A673 (cell line): ENCODE measurements at regions of chr1 and their contacts with region 1.

Region 1: DNA sequence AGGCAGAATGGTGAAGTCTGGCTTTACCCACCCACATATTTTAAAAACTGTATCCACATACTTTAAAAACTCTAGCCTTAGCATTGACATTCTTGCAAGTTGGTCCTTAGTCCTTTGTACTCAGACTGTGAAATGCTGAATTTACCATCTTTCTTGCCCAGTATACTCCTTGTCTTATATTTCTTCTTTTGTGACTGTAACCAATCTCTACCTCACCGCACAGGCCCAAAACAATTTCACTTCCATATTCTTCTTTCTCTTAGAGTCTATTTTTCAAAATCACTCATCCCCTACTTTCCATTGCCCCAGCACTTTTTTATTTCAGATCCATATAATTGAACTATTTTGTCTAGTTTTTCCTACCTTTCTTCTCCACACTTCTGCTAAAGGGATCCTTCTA is 892.4 kb upstream of the B3GALT2 start:
- DNase-seq: no peak
- H3K4me3 ChIP-seq: no peak overlapping the region
- H3K27ac ChIP-seq: no peak overlapping the region
- H3K4me1 ChIP-seq: no peaks in the 10 kb centered on the region
- H3K27me3 ChIP-seq: no peaks in the 10 kb centered on the region
- CTCF ChIP-seq: no peak

Region 2: GRCh38 chr1:193567937-193568336 is 510.8 kb before region 1 on chr1:
- CTCF ChIA-PET with region 1: no interaction called
- POLR2A ChIA-PET with region 1: interaction called, 19 read pairs
- intact Hi-C with region 1: no loop called
- DNase-seq: no peak
- H3K4me3 ChIP-seq: no peak overlapping the region
- H3K27ac ChIP-seq: no peak overlapping the region
- H3K4me1 ChIP-seq: no peaks in the 10 kb centered on the region
- H3K27me3 ChIP-seq: no peaks in the 10 kb centered on the region
- CTCF ChIP-seq: no peak

Region 3: GRCh38 chr1:194369060-194369459 is 290.3 kb after region 1 on chr1:
- CTCF ChIA-PET with region 1: no interaction called
- POLR2A ChIA-PET with region 1: no interaction called
- intact Hi-C with region 1: no loop called
- DNase-seq: no peak
- H3K4me3 ChIP-seq: no peak overlapping the region
- H3K27ac ChIP-seq: no peak overlapping the region
- H3K4me1 ChIP-seq: no peaks in the 10 kb centered on the region
- H3K27me3 ChIP-seq: no peaks in the 10 kb centered on the region
- CTCF ChIP-seq: no peak